ENCODE measurements at regions of chr2 and their contacts with region 1.

Region 1: GRCh38 chr2:31170071-31170698 is 31.9 kb upstream of the GALNT14 start:
- DNase-seq: peak; percentile 68
- H3K4me3 Mint-ChIP-seq: no peak overlapping the region
- H3K27ac Mint-ChIP-seq: no peak overlapping the region
- H3K4me1 Mint-ChIP-seq: no peaks in the 10 kb centered on the region
- H3K27me3 Mint-ChIP-seq: peaks cover 3% of the 10 kb centered on the region

Region 2: DNA sequence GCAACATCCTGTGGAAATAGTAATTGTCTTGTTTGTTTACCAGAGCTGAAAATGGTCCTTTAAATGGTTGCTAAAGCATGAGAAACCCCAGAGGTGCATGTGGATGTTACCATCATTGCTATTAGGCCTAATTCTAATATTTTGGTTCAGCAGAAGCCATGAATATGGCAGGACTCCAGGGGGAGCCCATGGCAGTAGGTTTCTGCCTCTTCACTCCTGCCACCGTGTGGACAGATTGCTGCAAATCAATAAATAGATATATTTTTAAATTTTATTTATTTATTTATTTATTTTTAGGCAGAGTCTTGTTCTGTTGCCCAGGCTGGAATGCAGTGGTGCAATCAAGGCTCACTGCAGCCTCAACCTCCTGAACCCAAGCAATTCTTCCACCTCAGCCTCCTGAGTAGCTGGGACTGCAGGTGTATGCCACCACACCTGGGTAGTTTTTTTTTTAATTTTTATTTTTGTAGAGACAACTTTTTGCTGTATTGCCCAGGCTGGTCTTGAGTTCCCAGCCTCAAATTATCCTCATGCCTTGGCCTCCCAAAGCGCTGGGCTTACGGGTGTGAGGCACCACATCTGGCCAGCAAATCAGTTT is 308.0 kb before region 1 on chr2:
- CTCF ChIA-PET with region 1: interaction called, 29 read pairs
- intact Hi-C with region 1: loop called (anchors 1 kb)
- DNase-seq: peak; percentile 71
- H3K4me3 Mint-ChIP-seq: no peak overlapping the region
- H3K27ac Mint-ChIP-seq: no peak overlapping the region
- H3K4me1 Mint-ChIP-seq: no peaks in the 10 kb centered on the region
- H3K27me3 Mint-ChIP-seq: peaks cover 7% of the 10 kb centered on the region

Region 3: GRCh38 chr2:31138037-31138962 is 31.9 kb before region 1 on chr2 and contains the start of gene GALNT14:
- CTCF ChIA-PET with region 1: interaction called, 4 read pairs
- intact Hi-C with region 1: loop called (anchors 1 kb)
- DNase-seq: peak; percentile 68
- H3K4me3 Mint-ChIP-seq: peak within 1 kb of the TSS; percentile 68
- H3K27ac Mint-ChIP-seq: no peak within 1 kb of the TSS
- H3K4me1 Mint-ChIP-seq: peaks cover 6% of the 10 kb centered on the region
- H3K27me3 Mint-ChIP-seq: peaks cover 51% of the 10 kb centered on the region
- total RNA-seq, gene GALNT14: 1.1 to 1.5 TPM

Region 4: DNA sequence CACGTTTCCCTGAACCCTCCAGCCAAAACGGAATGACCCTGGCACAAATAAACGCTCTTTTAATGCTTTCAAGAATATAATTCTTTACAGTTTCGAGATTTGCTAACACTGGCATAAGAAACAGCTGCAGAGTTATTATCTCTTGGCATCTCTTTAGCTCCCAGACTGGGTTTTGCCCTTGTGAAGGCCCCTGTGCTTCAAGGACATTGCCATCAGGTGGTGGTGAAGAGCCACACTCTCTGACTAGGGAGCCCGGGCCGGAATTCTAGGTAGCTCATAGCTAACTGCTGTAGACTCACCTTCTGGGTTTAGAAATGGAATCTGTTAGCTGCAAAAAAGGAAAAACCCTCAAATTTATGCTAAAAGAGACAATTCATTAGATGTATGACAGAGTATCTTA is 18.7 kb before region 1 on chr2:
- CTCF ChIA-PET with region 1: interaction called, 10 read pairs
- intact Hi-C with region 1: no loop called
- DNase-seq: no peak
- H3K4me3 Mint-ChIP-seq: no peak overlapping the region
- H3K27ac Mint-ChIP-seq: no peak overlapping the region
- H3K4me1 Mint-ChIP-seq: no peaks in the 10 kb centered on the region
- H3K27me3 Mint-ChIP-seq: peaks cover 2% of the 10 kb centered on the region